Vagina (tissue), 2 donors: ENCODE measurements at regions of chr7 and their contacts with region 1.

Region 1: GRCh38 chr7:80659120-80660055 is 20.9 kb downstream of the CD36 start:
- DNase-seq: no peak
- H3K4me3 ChIP-seq: no peak overlapping the region
- H3K27ac ChIP-seq: no peak overlapping the region
- H3K4me1 ChIP-seq: no peaks in the 10 kb centered on the region
- H3K27me3 ChIP-seq: no peaks in the 10 kb centered on the region
- CTCF ChIP-seq: peak; percentile 36 to 70 (median 64)
- POLR2A ChIP-seq: no peak

Region 2: GRCh38 chr7:80428161-80429054 is 231.0 kb before region 1 on chr7:
- intact Hi-C with region 1: loop called (anchors 10 kb)
- DNase-seq: no peak
- H3K4me3 ChIP-seq: no peak overlapping the region
- H3K27ac ChIP-seq: no peak overlapping the region
- H3K4me1 ChIP-seq: no peaks in the 10 kb centered on the region
- H3K27me3 ChIP-seq: no peaks in the 10 kb centered on the region
- CTCF ChIP-seq: peak; percentile 55 to 67 (median 55)
- POLR2A ChIP-seq: no peak